Activated naive CD4-positive, alpha-beta T cell treated with anti-CD3 and anti-CD28 coated beads for 36 hours (primary cell): ENCODE measurements at regions of chrX and their contacts with region 1.

Region 1: DNA sequence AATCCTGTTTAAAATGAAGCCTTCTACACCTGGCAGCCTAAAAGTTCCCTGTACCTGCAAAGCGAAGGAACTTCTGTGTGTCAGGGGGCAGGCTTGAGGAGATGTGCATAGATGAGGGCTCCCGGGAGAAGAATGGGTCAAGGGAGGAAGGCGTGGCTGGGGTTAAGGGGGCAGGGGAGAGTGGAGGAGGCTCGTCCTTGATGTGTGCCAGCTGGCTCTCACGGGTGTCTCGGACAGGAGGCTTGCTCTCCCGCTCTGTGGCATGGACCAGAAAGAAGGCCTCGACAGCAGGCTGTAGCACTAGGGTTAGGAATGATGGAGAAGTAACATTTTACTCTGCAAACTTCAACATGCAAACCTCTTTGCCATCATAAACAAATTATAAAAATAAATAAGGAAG is 104.6 kb upstream of the HSD17B10 start:
- DNase-seq: no peak
- H3K4me3 Mint-ChIP-seq: no peak overlapping the region
- H3K27ac Mint-ChIP-seq: no peak overlapping the region
- H3K4me1 Mint-ChIP-seq: no peaks in the 10 kb centered on the region
- H3K27me3 Mint-ChIP-seq: no peaks in the 10 kb centered on the region

Region 2: GRCh38 chrX:53294024-53294648 is 244.6 kb before region 1 on chrX:
- CTCF ChIA-PET with region 1: no interaction called
- intact Hi-C with region 1: no loop called
- DNase-seq: no peak
- H3K4me3 Mint-ChIP-seq: no peak overlapping the region
- H3K27ac Mint-ChIP-seq: no peak overlapping the region
- H3K4me1 Mint-ChIP-seq: no peaks in the 10 kb centered on the region
- H3K27me3 Mint-ChIP-seq: no peaks in the 10 kb centered on the region

Region 3: DNA sequence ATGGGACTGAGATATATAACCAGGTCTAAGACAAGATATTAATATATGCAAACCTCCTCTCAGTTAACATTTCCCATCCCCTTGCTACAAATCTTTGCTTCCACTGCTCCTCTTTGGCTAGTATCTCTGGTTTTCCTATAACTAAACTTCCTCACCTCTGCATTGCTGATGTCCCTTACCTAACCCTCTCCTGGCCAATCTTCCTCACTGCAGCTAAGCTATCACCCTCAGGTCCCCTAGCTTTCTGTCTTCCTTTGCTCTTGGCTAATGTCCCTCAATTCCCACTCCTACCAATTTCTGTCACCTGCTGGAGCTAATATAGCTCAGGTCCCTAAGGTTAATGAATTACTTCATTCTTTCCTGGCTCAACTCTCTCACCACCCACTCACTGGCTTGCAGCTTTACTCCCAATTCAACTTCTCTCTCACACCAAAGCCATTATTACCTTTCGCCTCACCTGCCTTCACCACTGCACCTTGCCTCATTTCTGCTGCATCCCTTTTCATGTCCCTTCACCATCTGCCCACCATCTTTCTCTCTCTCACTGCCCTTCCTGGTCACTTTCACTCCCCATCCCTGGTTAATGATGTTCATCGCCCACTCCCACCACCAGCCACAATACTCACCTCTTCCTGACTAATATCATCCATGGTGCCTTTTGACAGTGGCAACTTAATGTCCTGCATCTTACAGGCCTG is 143.0 kb before region 1 on chrX:
- CTCF ChIA-PET with region 1: no interaction called
- intact Hi-C with region 1: loop called (anchors 10 kb)
- DNase-seq: no peak
- H3K4me3 Mint-ChIP-seq: no peak overlapping the region
- H3K27ac Mint-ChIP-seq: no peak overlapping the region
- H3K4me1 Mint-ChIP-seq: no peaks in the 10 kb centered on the region
- H3K27me3 Mint-ChIP-seq: no peaks in the 10 kb centered on the region

Region 4: GRCh38 chrX:53526999-53527398 is 11.8 kb before region 1 on chrX:
- CTCF ChIA-PET with region 1: no interaction called
- intact Hi-C with region 1: no loop called
- DNase-seq: no peak
- H3K4me3 Mint-ChIP-seq: no peak overlapping the region
- H3K27ac Mint-ChIP-seq: no peak overlapping the region
- H3K4me1 Mint-ChIP-seq: no peaks in the 10 kb centered on the region
- H3K27me3 Mint-ChIP-seq: no peaks in the 10 kb centered on the region